ENCODE measurements at regions of chr16 and their contacts with region 1.

Region 1: GRCh38 chr16:78503602-78504001 is 404.1 kb downstream of the WWOX start:
- DNase-seq: peak in 2 of 4 donors; percentile 77 to 85
- ATAC-seq: peak; percentile 49
- H3K4me3 ChIP-seq: no peak overlapping the region
- H3K27ac ChIP-seq: no peak overlapping the region
- H3K4me1 ChIP-seq: no peaks in the 10 kb centered on the region
- H3K27me3 ChIP-seq: no peaks in the 10 kb centered on the region
- CTCF ChIP-seq: peak; percentile 73 to 86

Region 2: DNA sequence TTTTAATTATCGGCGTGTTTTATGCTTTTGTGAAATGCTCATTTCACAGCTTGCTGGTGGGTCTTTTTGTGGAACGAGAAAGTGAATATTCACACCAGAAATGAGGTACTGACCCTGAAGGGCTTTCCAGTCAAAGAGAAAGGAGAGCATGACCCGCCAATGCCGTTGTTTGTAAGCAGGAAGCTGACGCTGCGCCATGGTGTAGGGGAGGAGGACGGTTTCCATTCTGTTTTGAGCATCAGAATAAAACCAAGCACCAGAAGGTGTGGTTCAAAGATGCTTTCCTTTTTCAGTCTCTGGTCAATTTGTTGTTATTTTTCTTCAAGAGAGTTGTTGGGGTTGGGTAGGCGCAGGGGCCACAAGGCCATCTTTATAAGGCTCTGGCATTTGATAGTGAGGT is 265.1 kb after region 1 on chr16:
- intact Hi-C with region 1: loop called in 1 of 2 experiments (anchors 5 kb)
- DNase-seq: no peak
- ATAC-seq: no peak
- H3K4me3 ChIP-seq: no peak overlapping the region
- H3K27ac ChIP-seq: no peak overlapping the region
- H3K4me1 ChIP-seq: peaks cover 0 to 8% of the 10 kb centered on the region in 2 donors
- H3K27me3 ChIP-seq: no peaks in the 10 kb centered on the region
- CTCF ChIP-seq: no peak

Region 3: GRCh38 chr16:79601931-79602627 is 1098.5 kb after region 1 on chr16:
- intact Hi-C with region 1: loop called in 1 of 2 experiments (anchors 10 kb)
- DNase-seq: peak in 3 of 4 donors; percentile 78 to 94 (median 93)
- ATAC-seq: peak; percentile 38
- H3K4me3 ChIP-seq: peak overlapping the region; percentile 59 to 63
- H3K27ac ChIP-seq: peak overlapping the region; percentile 87 to 95
- H3K4me1 ChIP-seq: peaks cover 0 to 19% of the 10 kb centered on the region in 2 donors
- H3K27me3 ChIP-seq: peaks cover 0 to 38% of the 10 kb centered on the region in 2 donors
- CTCF ChIP-seq: peak; percentile 73 to 76

Measured in left lung (tissue), 14 donors.